CD8-positive, alpha-beta memory T cell (primary cell): ENCODE measurements at regions of chr13 and their contacts with region 1.

Region 1: GRCh38 chr13:49279885-49280284 is 32.2 kb downstream of the CDADC1 start:
- DNase-seq: no peak
- H3K4me3 ChIP-seq: no peak overlapping the region
- H3K4me3 Mint-ChIP-seq: no peak overlapping the region
- H3K27ac ChIP-seq: no peak overlapping the region
- H3K27ac Mint-ChIP-seq: peak overlapping the region in 1 of 8 donors; percentile 46
- H3K4me1 ChIP-seq: no peaks in the 10 kb centered on the region
- H3K4me1 Mint-ChIP-seq: no peaks in the 10 kb centered on the region
- H3K27me3 ChIP-seq: no peaks in the 10 kb centered on the region
- H3K27me3 Mint-ChIP-seq: no peaks in the 10 kb centered on the region

Region 2: DNA sequence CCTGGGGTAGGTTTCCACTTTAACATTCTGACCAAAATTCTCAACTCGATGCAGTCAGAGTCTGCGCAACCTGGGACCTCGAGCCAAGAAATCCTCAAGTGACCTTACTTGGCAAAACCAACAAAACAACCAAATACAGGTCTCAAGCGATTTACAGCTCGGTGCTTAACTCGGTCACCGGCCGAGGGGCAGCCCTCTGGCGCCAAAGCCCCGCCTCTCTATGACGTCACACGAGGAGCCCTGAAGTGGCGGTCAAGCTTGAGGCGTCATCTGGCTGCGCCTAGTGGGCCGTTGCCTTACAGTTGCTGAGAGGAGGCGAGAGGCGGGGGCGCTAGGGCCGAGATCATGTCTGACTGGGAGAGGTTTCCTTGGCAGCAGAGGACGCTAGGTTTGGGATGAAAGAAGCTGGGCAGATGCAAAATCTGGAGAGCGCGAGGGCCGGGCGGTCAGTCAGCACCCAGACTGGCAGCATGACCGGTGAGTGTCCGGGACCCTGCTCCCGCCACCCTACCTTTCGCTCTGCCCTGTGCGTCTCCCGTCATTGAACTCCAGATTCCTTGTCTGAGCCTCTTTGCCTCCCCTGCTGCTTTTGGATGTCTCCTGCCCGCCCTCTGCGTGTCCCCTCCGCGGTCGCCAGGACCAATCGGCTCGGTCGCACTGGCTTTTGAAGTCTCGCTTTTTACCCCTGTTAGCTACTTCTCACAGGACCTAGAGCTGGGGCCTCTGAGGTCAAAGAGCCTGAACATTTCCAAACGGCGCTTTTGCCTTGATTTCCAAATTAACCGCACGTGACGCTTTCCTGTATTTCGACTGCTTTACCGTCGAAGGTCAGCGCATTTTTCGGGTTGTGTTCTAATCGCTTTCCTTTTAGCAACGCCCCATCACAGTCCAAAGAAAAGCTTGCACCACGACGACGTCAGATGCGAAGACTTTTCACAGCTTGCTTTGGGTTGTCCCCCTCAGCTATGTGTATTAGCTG is 32.0 kb before region 1 on chr13 and contains the start of gene CDADC1:
- CTCF ChIA-PET with region 1: interaction called, 12 read pairs
- POLR2A ChIA-PET with region 1: interaction called, 3 read pairs
- DNase-seq: peak; percentile 72 to 91 (median 84)
- H3K4me3 ChIP-seq: peak within 1 kb of the TSS; percentile 76
- H3K4me3 Mint-ChIP-seq: peak within 1 kb of the TSS; percentile 95 to 100 (median 99)
- H3K27ac ChIP-seq: peak within 1 kb of the TSS; percentile 84
- H3K27ac Mint-ChIP-seq: peak within 1 kb of the TSS; percentile 89 to 99 (median 98)
- H3K4me1 ChIP-seq: peaks cover 30% of the 10 kb centered on the region
- H3K4me1 Mint-ChIP-seq: peaks cover 37 to 58% (median 57%) of the 10 kb centered on the region in 3 donors
- H3K27me3 ChIP-seq: no peaks in the 10 kb centered on the region
- H3K27me3 Mint-ChIP-seq: peaks cover 4 to 5% of the 10 kb centered on the region in 2 donors
- total RNA-seq, gene CDADC1: 9.8 to 10.8 TPM

Region 3: DNA sequence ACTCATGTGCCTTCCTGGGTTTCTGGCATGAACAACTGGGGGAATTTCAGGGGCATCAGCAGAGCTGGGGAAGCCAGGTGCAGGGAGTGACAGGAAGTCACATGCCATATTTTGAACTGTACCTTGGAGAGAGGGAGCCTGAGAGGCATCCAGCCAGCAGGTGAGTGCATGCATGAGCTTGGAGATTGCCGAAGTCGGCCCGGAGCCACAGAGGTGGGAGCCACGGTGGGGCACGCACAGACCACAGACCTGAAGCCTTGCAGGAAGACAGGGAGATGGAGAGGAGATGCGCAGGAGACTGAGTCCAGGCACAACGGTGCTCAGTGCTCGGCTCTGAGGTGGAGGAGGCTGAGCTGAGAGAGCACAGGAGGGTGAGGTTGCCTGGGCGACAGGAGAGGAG is 22.9 kb after region 1 on chr13:
- CTCF ChIA-PET with region 1: no interaction called
- POLR2A ChIA-PET with region 1: no interaction called
- DNase-seq: no peak
- H3K4me3 ChIP-seq: no peak overlapping the region
- H3K4me3 Mint-ChIP-seq: no peak overlapping the region
- H3K27ac ChIP-seq: no peak overlapping the region
- H3K27ac Mint-ChIP-seq: peak overlapping the region in 4 of 8 donors; percentile 32 to 93 (median 48)
- H3K4me1 ChIP-seq: peaks cover 6% of the 10 kb centered on the region
- H3K4me1 Mint-ChIP-seq: peaks cover 4 to 12% (median 6%) of the 10 kb centered on the region in 3 donors
- H3K27me3 ChIP-seq: no peaks in the 10 kb centered on the region
- H3K27me3 Mint-ChIP-seq: no peaks in the 10 kb centered on the region